PC-3 (cell line): ENCODE measurements at regions of chr2 and their contacts with region 1.

Region 1: GRCh38 chr2:202588647-202589581 is 45.9 kb upstream of the FAM117B start:
- DNase-seq: peak; percentile 89
- ATAC-seq: peak; percentile 95
- H3K4me3 ChIP-seq: no peak overlapping the region
- H3K27ac ChIP-seq: no peak overlapping the region
- H3K4me1 ChIP-seq: peaks cover 4% of the 10 kb centered on the region
- H3K27me3 ChIP-seq: no peaks in the 10 kb centered on the region
- CTCF ChIP-seq: peak; percentile 91

Region 2: DNA sequence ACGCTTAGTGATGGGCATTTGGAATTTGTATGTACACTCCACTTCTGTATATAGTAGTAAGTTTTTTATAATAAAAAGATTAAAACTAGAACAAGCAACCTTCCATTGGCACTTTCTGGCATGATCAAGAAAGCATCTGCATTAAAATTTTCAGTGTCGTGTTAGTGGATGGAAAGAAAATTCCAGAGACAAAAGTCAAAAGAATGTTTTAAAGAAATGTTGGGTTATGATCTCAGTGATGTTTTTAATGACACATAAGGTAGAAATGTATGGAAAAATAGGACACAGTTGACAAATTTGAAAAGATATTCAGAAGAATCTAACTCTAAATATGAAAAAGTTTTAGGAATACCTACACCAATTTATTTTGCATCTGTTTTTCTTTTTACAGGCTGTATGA is 80.2 kb before region 1 on chr2:
- CTCF ChIA-PET with region 1: no interaction called
- POLR2A ChIA-PET with region 1: no interaction called
- intact Hi-C with region 1: no loop called
- DNase-seq: no peak
- ATAC-seq: no peak
- H3K4me3 ChIP-seq: no peak overlapping the region
- H3K27ac ChIP-seq: no peak overlapping the region
- H3K4me1 ChIP-seq: no peaks in the 10 kb centered on the region
- H3K27me3 ChIP-seq: no peaks in the 10 kb centered on the region
- CTCF ChIP-seq: no peak

Region 3: GRCh38 chr2:202634556-202635427 is 45.9 kb after region 1 on chr2 and contains the start of gene FAM117B:
- CTCF ChIA-PET with region 1: interaction called, 4 read pairs
- POLR2A ChIA-PET with region 1: no interaction called
- intact Hi-C with region 1: loop called (anchors 1 kb)
- DNase-seq: peak; percentile 97
- ATAC-seq: peak; percentile 93
- H3K4me3 ChIP-seq: peak within 1 kb of the TSS; percentile 99
- H3K27ac ChIP-seq: 0 out of 2 replicates have a peak within 1 kb of the TSS, but pooled peaks have one; percentile 33
- H3K4me1 ChIP-seq: peaks cover 24% of the 10 kb centered on the region
- H3K27me3 ChIP-seq: no peaks in the 10 kb centered on the region
- CTCF ChIP-seq: no peak
- total RNA-seq, gene FAM117B: 2.2 and 3.6 TPM in 2 replicates

Region 4: DNA sequence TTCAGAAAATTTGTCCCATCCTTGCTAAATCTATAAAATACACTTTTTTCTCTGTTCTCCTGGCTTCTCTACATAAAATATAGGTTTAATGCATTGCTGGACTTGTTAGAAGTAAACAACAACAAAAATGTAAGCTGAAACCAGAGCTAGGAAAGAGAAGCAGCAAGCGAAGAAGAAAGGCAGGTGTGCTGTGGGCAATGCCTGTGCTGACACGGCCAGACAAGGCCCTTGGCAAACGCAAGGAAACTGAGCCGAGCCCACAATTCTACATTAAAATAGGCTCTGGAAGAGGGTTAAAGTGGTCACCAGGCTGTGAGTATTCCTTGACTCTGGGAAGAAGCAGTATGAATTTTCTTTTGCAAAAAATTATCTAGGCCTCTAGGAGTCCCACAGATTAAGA is 212.6 kb after region 1 on chr2:
- CTCF ChIA-PET with region 1: no interaction called
- POLR2A ChIA-PET with region 1: no interaction called
- intact Hi-C with region 1: loop called (anchors 10 kb)
- DNase-seq: no peak
- ATAC-seq: no peak
- H3K4me3 ChIP-seq: no peak overlapping the region
- H3K27ac ChIP-seq: no peak overlapping the region
- H3K4me1 ChIP-seq: 0 out of 2 replicates have a peak, but pooled peaks cover under 1% of the 10 kb centered on the region
- H3K27me3 ChIP-seq: no peaks in the 10 kb centered on the region
- CTCF ChIP-seq: no peak

Region 5: DNA sequence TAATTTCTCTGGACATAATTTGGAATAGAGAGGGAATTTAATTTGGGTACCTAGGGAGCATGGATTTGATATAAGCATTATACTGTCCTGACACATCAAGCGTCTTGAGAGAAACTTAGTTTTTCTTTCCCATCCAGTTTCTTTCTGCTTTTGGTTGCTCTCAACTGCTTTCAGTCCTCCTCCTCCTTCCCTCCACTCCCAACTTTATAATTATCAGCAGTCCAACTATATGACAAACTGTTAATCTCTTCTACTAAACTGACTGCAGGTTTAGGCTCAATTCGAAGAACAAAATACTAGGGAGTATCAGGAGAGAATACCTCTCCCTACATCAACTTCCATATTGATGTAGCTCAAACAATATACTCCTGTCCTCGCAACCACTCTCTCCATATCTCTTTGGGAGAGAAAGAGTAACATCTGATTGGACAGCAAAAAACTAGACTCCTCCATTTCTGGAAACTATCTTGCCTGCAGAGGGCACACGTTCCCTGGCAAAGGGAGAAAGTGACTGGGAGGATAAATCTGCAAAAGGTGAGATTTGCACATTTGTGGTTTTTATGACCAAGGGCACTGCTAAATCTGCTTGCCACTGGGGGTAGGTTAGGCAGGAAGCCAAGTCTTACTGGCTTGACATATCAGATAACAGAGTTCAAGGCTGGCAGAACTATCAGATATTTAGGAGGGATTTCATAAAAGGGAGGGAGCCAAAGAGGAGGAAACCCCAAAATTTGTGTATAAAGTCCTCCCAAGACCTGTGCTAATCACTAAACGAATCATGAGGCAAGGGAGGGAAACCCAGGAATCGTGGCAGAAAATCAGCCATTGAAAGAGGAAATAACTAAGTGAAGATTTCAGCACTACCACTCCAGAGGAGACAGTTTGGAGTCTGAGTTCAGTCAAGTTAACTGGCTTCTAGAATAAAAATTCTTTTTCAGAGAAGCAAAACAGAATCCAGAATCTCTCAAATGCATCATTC is 242.6 kb after region 1 on chr2:
- CTCF ChIA-PET with region 1: interaction called, 3 read pairs
- POLR2A ChIA-PET with region 1: no interaction called
- intact Hi-C with region 1: loop called (anchors 2 kb)
- DNase-seq: peak; percentile 86
- ATAC-seq: peak; percentile 97
- H3K4me3 ChIP-seq: peak overlapping the region; percentile 38
- H3K27ac ChIP-seq: no peak overlapping the region
- H3K4me1 ChIP-seq: peaks cover 6% of the 10 kb centered on the region
- H3K27me3 ChIP-seq: no peaks in the 10 kb centered on the region
- CTCF ChIP-seq: peak; percentile 95

Region 6: GRCh38 chr2:202870431-202871299 is 281.8 kb after region 1 on chr2:
- CTCF ChIA-PET with region 1: interaction called, 4 read pairs
- POLR2A ChIA-PET with region 1: no interaction called
- intact Hi-C with region 1: loop called (anchors 1 kb)
- DNase-seq: peak; percentile 86
- ATAC-seq: peak; percentile 71
- H3K4me3 ChIP-seq: peak overlapping the region; percentile 78
- H3K27ac ChIP-seq: peak overlapping the region; percentile 38
- H3K4me1 ChIP-seq: 0 out of 2 replicates have a peak, but pooled peaks cover 8% of the 10 kb centered on the region
- H3K27me3 ChIP-seq: no peaks in the 10 kb centered on the region
- CTCF ChIP-seq: peak; percentile 63

Region 7: DNA sequence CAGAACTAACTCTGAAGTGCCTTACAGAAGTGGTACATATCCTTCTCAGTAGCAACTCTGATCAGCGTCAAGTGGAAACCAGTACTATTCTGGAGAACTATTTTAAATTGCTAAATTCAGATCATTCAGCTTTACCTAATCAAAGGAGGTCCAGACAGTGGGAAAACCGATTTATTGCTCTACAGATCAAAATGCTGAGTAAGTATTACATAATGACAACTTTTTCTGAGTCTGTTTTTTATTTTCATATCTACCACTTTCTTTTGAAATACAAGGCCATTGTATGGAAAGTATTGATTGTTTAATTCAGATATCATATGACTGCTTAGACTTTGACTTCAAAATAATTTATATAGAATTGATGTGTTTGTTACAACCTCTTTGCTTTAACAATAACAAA is 494.4 kb after region 1 on chr2:
- CTCF ChIA-PET with region 1: interaction called, 14 read pairs
- POLR2A ChIA-PET with region 1: no interaction called
- intact Hi-C with region 1: no loop called
- DNase-seq: no peak
- ATAC-seq: no peak
- H3K4me3 ChIP-seq: no peak overlapping the region
- H3K27ac ChIP-seq: no peak overlapping the region
- H3K4me1 ChIP-seq: no peaks in the 10 kb centered on the region
- H3K27me3 ChIP-seq: no peaks in the 10 kb centered on the region
- CTCF ChIP-seq: no peak